ENCODE measurements at regions of chr4 and their contacts with region 1.

Region 1: GRCh38 chr4:98150092-98150761 is 7.0 kb upstream of the STPG2 start:
- DNase-seq: no peak
- H3K4me3 ChIP-seq: no peak overlapping the region
- H3K27ac ChIP-seq: no peak overlapping the region
- H3K4me1 ChIP-seq: peaks cover 31% of the 10 kb centered on the region
- H3K27me3 ChIP-seq: no peaks in the 10 kb centered on the region
- CTCF ChIP-seq: peak; percentile 56; the same call in 1 of the 2 replicates

Region 2: DNA sequence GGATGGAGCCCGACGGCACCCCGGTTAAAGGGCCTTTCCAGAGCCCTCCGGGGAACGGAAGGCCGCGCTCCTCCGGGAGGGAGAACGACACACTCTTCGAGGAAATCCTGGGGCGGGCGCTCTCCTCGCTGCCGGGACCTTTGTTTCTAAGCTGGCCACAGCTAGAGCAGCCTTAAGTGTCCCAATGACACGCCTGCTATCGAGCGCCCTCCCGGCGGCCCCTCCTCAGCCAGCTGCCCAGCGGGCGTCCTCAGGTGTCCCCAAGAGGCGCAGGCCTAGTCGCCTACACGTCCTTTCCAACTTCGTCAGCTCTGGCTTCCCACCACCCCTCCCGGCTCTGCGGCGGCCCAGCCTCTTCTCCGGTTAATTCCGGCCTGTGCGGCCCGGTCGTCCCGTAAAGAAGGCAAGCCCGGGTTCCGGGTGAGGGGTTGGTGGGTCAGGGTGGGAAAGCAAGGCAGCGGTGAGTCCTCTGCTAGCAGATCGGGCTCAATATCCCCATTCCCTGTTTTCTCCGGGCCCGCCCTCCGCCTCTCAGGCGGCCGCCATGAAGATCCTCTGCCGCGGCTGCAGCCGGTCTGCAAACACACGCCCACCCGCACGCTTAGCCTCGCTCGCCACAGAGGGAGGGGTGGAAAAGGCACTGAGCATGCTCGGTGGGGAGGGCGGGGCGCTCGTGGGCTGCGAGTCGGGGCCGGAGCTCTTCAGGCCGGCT is 110.5 kb after region 1 on chr4:
- CTCF ChIA-PET with region 1: no interaction called
- POLR2A ChIA-PET with region 1: no interaction called
- intact Hi-C with region 1: loop called (anchors 5 kb)
- DNase-seq: peak; percentile 98
- H3K4me3 ChIP-seq: peak overlapping the region; percentile 78
- H3K27ac ChIP-seq: peak overlapping the region; percentile 94
- H3K4me1 ChIP-seq: peaks cover 7% of the 10 kb centered on the region
- H3K27me3 ChIP-seq: no peaks in the 10 kb centered on the region
- CTCF ChIP-seq: no peak

Region 3: GRCh38 chr4:98845960-98846359 is 695.7 kb after region 1 on chr4:
- CTCF ChIA-PET with region 1: no interaction called
- POLR2A ChIA-PET with region 1: no interaction called
- intact Hi-C with region 1: loop called (anchors 5 kb)
- DNase-seq: no peak
- H3K4me3 ChIP-seq: no peak overlapping the region
- H3K27ac ChIP-seq: no peak overlapping the region
- H3K4me1 ChIP-seq: peaks cover 9% of the 10 kb centered on the region
- H3K27me3 ChIP-seq: no peaks in the 10 kb centered on the region
- CTCF ChIP-seq: no peak

Region 4: GRCh38 chr4:98909646-98910401 is 759.6 kb after region 1 on chr4:
- CTCF ChIA-PET with region 1: no interaction called
- POLR2A ChIA-PET with region 1: no interaction called
- intact Hi-C with region 1: loop called (anchors 5 kb)
- DNase-seq: no peak
- H3K4me3 ChIP-seq: no peak overlapping the region
- H3K27ac ChIP-seq: peak overlapping the region; percentile 22
- H3K4me1 ChIP-seq: peaks cover 22% of the 10 kb centered on the region
- H3K27me3 ChIP-seq: no peaks in the 10 kb centered on the region
- CTCF ChIP-seq: no peak

Region 5: GRCh38 chr4:99054428-99054994 is 904.3 kb after region 1 on chr4:
- CTCF ChIA-PET with region 1: no interaction called
- POLR2A ChIA-PET with region 1: no interaction called
- intact Hi-C with region 1: loop called (anchors 2 kb)
- DNase-seq: no peak
- H3K4me3 ChIP-seq: no peak overlapping the region
- H3K27ac ChIP-seq: no peak overlapping the region
- H3K4me1 ChIP-seq: peaks cover 7% of the 10 kb centered on the region
- H3K27me3 ChIP-seq: no peaks in the 10 kb centered on the region
- CTCF ChIP-seq: no peak

Region 6: GRCh38 chr4:99405433-99406115 is 1255.3 kb after region 1 on chr4:
- CTCF ChIA-PET with region 1: no interaction called
- POLR2A ChIA-PET with region 1: no interaction called
- intact Hi-C with region 1: loop called (anchors 2 kb)
- DNase-seq: peak; percentile 70
- H3K4me3 ChIP-seq: no peak overlapping the region
- H3K27ac ChIP-seq: no peak overlapping the region
- H3K4me1 ChIP-seq: no peaks in the 10 kb centered on the region
- H3K27me3 ChIP-seq: no peaks in the 10 kb centered on the region
- CTCF ChIP-seq: peak; percentile 85

Measured in A673 (cell line).